Activated CD4-positive, alpha-beta T cell treated with anti-CD3 and anti-CD28 coated beads for 36 hours (primary cell): ENCODE measurements at regions of chr19 and their contacts with region 1.

Region 1: GRCh38 chr19:21020298-21021227 is at the start of gene ZNF430:
- DNase-seq: peak; percentile 96
- ATAC-seq: peak; percentile 95
- H3K4me3 Mint-ChIP-seq: peak within 1 kb of the TSS; percentile 96
- H3K27ac Mint-ChIP-seq: peak within 1 kb of the TSS; percentile 99
- H3K4me1 Mint-ChIP-seq: peaks cover 40% of the 10 kb centered on the region
- H3K27me3 Mint-ChIP-seq: no peaks in the 10 kb centered on the region
- total RNA-seq, gene ZNF430: 14.7 to 17.1 TPM

Region 2: GRCh38 chr19:19185853-19186740 is 1834.5 kb before region 1 on chr19:
- CTCF ChIA-PET with region 1: no interaction called
- POLR2A ChIA-PET with region 1: no interaction called
- intact Hi-C with region 1: no loop called
- DNase-seq: peak; percentile 75
- ATAC-seq: peak; percentile 89
- H3K4me3 Mint-ChIP-seq: no peak overlapping the region
- H3K27ac Mint-ChIP-seq: peak overlapping the region; percentile 60
- H3K4me1 Mint-ChIP-seq: peaks cover 28% of the 10 kb centered on the region
- H3K27me3 Mint-ChIP-seq: no peaks in the 10 kb centered on the region

Region 3: GRCh38 chr19:19597809-19598306 is 1422.7 kb before region 1 on chr19:
- CTCF ChIA-PET with region 1: no interaction called
- POLR2A ChIA-PET with region 1: no interaction called
- intact Hi-C with region 1: loop called in 1 of 2 experiments (anchors 5 kb)
- DNase-seq: peak; percentile 70
- ATAC-seq: peak; percentile 66
- H3K4me3 Mint-ChIP-seq: peak overlapping the region; percentile 67
- H3K27ac Mint-ChIP-seq: peak overlapping the region; percentile 97
- H3K4me1 Mint-ChIP-seq: peaks cover 82% of the 10 kb centered on the region
- H3K27me3 Mint-ChIP-seq: no peaks in the 10 kb centered on the region

Region 4: GRCh38 chr19:20167020-20167644 is 853.4 kb before region 1 on chr19 and contains the start of gene ZNF486:
- CTCF ChIA-PET with region 1: no interaction called
- POLR2A ChIA-PET with region 1: no interaction called
- intact Hi-C with region 1: loop called in 1 of 2 experiments (anchors 1 kb)
- DNase-seq: peak; percentile 97
- ATAC-seq: peak; percentile 99
- H3K4me3 Mint-ChIP-seq: peak within 1 kb of the TSS; percentile 99
- H3K27ac Mint-ChIP-seq: peak within 1 kb of the TSS; percentile 97
- H3K4me1 Mint-ChIP-seq: peaks cover 34% of the 10 kb centered on the region
- H3K27me3 Mint-ChIP-seq: no peaks in the 10 kb centered on the region
- total RNA-seq, gene ZNF486: 16.1 to 18.1 TPM

Region 5: GRCh38 chr19:20661150-20661819 is 359.3 kb before region 1 on chr19 and contains the start of gene ZNF626:
- CTCF ChIA-PET with region 1: no interaction called
- POLR2A ChIA-PET with region 1: interaction called, 5 read pairs
- intact Hi-C with region 1: loop called in 1 of 2 experiments (anchors 5 kb)
- DNase-seq: peak; percentile 96
- ATAC-seq: peak; percentile 99
- H3K4me3 Mint-ChIP-seq: peak within 1 kb of the TSS; percentile 92
- H3K27ac Mint-ChIP-seq: peak within 1 kb of the TSS; percentile 95
- H3K4me1 Mint-ChIP-seq: peaks cover 33% of the 10 kb centered on the region
- H3K27me3 Mint-ChIP-seq: no peaks in the 10 kb centered on the region
- total RNA-seq, gene ZNF626: 8.0 to 13.3 TPM

Region 6: GRCh38 chr19:20999731-21000352 is 20.7 kb before region 1 on chr19:
- CTCF ChIA-PET with region 1: no interaction called
- POLR2A ChIA-PET with region 1: interaction called, 23 read pairs
- intact Hi-C with region 1: loop called (anchors 1 to 2 kb)
- DNase-seq: peak; percentile 95
- ATAC-seq: peak; percentile 100
- H3K4me3 Mint-ChIP-seq: peak overlapping the region; percentile 89
- H3K27ac Mint-ChIP-seq: peak overlapping the region; percentile 91
- H3K4me1 Mint-ChIP-seq: peaks cover 9% of the 10 kb centered on the region
- H3K27me3 Mint-ChIP-seq: no peaks in the 10 kb centered on the region

Region 7: GRCh38 chr19:21328885-21329605 is 308.5 kb after region 1 on chr19 and contains the start of gene ZNF708:
- CTCF ChIA-PET with region 1: no interaction called
- POLR2A ChIA-PET with region 1: no interaction called
- intact Hi-C with region 1: loop called in 1 of 2 experiments (anchors 5 kb)
- DNase-seq: peak; percentile 85
- ATAC-seq: peak; percentile 100
- H3K4me3 Mint-ChIP-seq: peak within 1 kb of the TSS; percentile 97
- H3K27ac Mint-ChIP-seq: peak within 1 kb of the TSS; percentile 100
- H3K4me1 Mint-ChIP-seq: peaks cover 33% of the 10 kb centered on the region
- H3K27me3 Mint-ChIP-seq: no peaks in the 10 kb centered on the region
- total RNA-seq, gene ZNF708: 11.7 to 11.8 TPM

Region 8: DNA sequence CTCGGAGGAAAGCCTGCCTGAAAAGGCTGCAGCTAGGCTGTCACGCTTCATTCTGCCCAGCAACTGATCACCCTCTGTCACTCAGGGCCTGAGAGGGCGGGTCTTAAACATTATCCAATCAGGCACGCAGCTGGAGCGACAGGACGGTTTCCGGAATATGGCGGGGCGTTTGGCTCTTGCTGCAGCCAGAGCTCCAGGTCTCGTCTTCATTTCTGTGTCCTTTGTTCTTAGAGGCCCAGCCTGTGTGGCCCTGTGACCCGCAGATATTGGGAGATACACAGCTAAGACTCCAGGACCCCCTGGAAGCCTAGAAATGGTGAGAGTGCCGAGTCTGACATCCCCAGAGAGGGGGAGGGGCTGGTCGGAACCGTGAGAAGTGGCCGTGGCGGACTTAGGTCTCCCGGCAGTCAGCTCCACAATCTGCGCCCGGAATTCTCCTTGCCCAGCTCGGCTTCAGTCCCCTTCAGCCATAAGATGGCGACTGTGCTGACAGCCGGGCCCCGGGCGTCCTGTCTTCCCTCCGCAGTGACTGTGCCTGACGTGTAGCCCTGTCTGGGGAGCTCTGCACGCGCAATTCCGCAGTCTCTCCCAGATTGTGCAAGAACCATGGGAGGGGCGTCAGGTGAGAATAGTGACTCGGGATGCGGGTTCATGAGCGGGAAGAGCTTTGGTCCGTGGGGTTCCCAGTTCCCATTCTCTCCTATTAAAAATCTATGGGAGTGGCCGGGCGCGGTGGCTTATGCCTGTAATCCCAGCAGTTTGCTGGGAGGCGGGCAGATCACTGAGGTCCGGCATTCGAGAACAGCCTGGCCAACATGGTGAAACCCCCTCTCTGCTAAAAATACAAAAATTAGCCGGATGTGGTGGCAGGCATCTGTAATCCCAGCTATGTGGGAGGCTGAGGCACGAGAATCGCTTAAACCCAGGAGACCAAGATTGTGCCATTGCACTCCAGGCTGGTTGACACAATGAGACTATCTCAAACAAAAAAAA is 485.2 kb after region 1 on chr19 and contains the start of gene ZNF429:
- CTCF ChIA-PET with region 1: no interaction called
- POLR2A ChIA-PET with region 1: no interaction called
- intact Hi-C with region 1: loop called in 1 of 2 experiments (anchors 1 kb)
- DNase-seq: peak; percentile 94
- ATAC-seq: peak; percentile 99
- H3K4me3 Mint-ChIP-seq: peak within 1 kb of the TSS; percentile 100
- H3K27ac Mint-ChIP-seq: peak within 1 kb of the TSS; percentile 99
- H3K4me1 Mint-ChIP-seq: peaks cover 38% of the 10 kb centered on the region
- H3K27me3 Mint-ChIP-seq: no peaks in the 10 kb centered on the region
- total RNA-seq, gene ZNF429: 13.3 to 15.5 TPM